ENCODE measurements at regions of chr1 and their contacts with region 1.

Region 1: GRCh38 chr1:112706908-112707663 is at the start of gene RHOC:
- DNase-seq: peak; percentile 46 to 70 (median 52)
- H3K4me3 ChIP-seq: peak within 1 kb of the TSS; percentile 27
- H3K4me3 Mint-ChIP-seq: peak within 1 kb of the TSS; percentile 71 to 94 (median 87)
- H3K27ac ChIP-seq: peak within 1 kb of the TSS; percentile 71
- H3K27ac Mint-ChIP-seq: peak within 1 kb of the TSS in 7 of 8 donors; percentile 70 to 97 (median 90)
- H3K4me1 ChIP-seq: peaks cover 33% of the 10 kb centered on the region
- H3K4me1 Mint-ChIP-seq: peaks cover 38 to 43% (median 41%) of the 10 kb centered on the region in 3 donors
- H3K27me3 ChIP-seq: no peaks in the 10 kb centered on the region
- H3K27me3 Mint-ChIP-seq: peaks cover 2 to 5% of the 10 kb centered on the region in 2 donors
- total RNA-seq, gene RHOC: 20.3 to 23.0 TPM

Region 2: GRCh38 chr1:112390775-112391602 is 316.1 kb before region 1 on chr1:
- CTCF ChIA-PET with region 1: interaction called, 20 read pairs
- POLR2A ChIA-PET with region 1: no interaction called
- DNase-seq: peak; percentile 60 to 82 (median 71)
- H3K4me3 ChIP-seq: no peak overlapping the region
- H3K4me3 Mint-ChIP-seq: peak overlapping the region in 5 of 7 donors; percentile 15 to 49 (median 45)
- H3K27ac ChIP-seq: no peak overlapping the region
- H3K27ac Mint-ChIP-seq: no peak overlapping the region
- H3K4me1 ChIP-seq: peaks cover 13% of the 10 kb centered on the region
- H3K4me1 Mint-ChIP-seq: peaks cover 10 to 14% (median 14%) of the 10 kb centered on the region in 3 donors
- H3K27me3 ChIP-seq: no peaks in the 10 kb centered on the region
- H3K27me3 Mint-ChIP-seq: peaks cover 32 to 53% of the 10 kb centered on the region in 2 donors

Region 3: DNA sequence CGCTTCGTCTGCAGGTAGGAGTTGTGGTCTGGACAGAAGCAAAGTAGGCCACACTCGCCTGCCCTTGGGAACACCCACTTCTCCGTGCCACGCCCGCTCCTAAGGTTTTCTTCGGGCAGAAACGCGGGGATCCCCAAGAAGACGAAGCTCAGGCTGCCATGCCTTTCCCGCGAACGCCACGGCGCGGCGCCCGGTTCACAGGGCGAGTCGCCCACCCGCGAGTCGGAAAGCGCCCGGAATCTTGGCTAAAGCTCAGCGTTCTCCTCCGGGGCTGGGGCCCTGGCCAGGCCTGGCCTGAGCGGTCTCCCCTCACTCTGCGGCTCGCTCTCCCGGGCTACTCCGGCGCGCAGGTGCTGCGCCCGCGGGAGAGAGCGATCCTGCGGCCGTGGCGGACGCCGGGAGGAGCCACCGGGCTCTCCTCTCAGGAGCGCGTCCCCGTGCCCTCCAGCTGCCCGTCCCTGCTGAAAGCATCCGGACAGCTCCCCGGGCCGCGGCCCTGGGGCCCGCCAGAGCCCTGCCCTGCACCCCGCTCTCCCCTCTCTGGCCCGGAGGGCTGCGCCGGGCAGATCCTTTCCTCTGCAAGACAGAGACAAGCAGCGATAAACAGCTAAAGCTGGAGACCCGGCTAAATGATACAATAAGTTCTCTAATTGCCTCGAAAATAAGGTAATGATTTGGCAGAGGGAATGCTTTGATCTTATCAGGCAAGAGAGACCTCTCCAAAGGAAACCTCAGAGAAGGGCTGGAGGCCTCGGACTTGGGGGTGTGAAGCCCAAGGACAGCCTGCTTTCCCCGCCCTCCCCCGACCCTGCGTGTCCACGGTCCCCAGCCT is 205.1 kb before region 1 on chr1:
- CTCF ChIA-PET with region 1: interaction called, 51 read pairs
- POLR2A ChIA-PET with region 1: interaction called, 3 read pairs
- DNase-seq: peak; percentile 29 to 68 (median 36)
- H3K4me3 ChIP-seq: peak overlapping the region; percentile 34
- H3K4me3 Mint-ChIP-seq: peak overlapping the region; percentile 7 to 76 (median 70)
- H3K27ac ChIP-seq: no peak overlapping the region
- H3K27ac Mint-ChIP-seq: no peak overlapping the region
- H3K4me1 ChIP-seq: peaks cover 5% of the 10 kb centered on the region
- H3K4me1 Mint-ChIP-seq: peaks cover 2 to 11% (median 6%) of the 10 kb centered on the region in 3 donors
- H3K27me3 ChIP-seq: peaks cover 42% of the 10 kb centered on the region
- H3K27me3 Mint-ChIP-seq: peaks cover 50 to 74% of the 10 kb centered on the region in 2 donors

Region 4: DNA sequence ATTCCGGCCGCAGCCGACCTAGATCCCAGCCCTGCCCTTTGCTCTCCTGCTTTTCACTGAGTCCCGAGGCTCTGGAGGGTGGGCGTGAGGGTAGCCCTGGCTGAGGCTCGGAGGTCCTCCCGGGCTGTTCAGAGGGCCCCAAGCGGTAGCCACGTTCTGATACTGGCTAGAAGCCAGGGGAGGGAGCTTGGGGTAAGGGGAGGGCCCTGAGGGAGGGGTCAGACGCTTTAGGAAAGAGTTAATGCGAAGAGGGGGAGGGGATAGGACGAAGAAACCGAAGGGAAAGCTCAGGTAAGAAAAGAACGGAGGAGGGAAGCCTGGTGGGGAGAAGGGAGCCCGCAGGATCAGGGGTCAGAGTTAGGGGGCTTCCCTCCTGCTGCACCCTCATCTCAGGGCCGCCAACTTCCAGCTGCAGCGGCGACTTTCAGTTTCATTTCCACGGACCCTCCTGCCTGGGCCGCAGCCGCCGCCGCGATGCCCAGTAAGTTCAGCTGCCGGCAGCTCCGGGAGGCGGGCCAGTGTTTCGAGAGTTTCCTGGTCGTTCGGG is 32.6 kb before region 1 on chr1 and contains the start of gene MOV10:
- CTCF ChIA-PET with region 1: interaction called, 23 read pairs
- POLR2A ChIA-PET with region 1: interaction called, 3 read pairs
- DNase-seq: peak; percentile 48 to 77 (median 64)
- H3K4me3 ChIP-seq: peak within 1 kb of the TSS; percentile 79
- H3K4me3 Mint-ChIP-seq: peak within 1 kb of the TSS; percentile 81 to 99 (median 97)
- H3K27ac ChIP-seq: peak within 1 kb of the TSS; percentile 81
- H3K27ac Mint-ChIP-seq: peak within 1 kb of the TSS; percentile 61 to 98 (median 94)
- H3K4me1 ChIP-seq: peaks cover 24% of the 10 kb centered on the region
- H3K4me1 Mint-ChIP-seq: peaks cover 45 to 58% (median 52%) of the 10 kb centered on the region in 3 donors
- H3K27me3 ChIP-seq: no peaks in the 10 kb centered on the region
- H3K27me3 Mint-ChIP-seq: no peaks in the 10 kb centered on the region
- total RNA-seq, gene MOV10: 29.9 to 31.0 TPM

Region 5: GRCh38 chr1:112778137-112778536 is 71.1 kb after region 1 on chr1:
- CTCF ChIA-PET with region 1: no interaction called
- POLR2A ChIA-PET with region 1: no interaction called
- DNase-seq: no peak
- H3K4me3 ChIP-seq: no peak overlapping the region
- H3K4me3 Mint-ChIP-seq: no peak overlapping the region
- H3K27ac ChIP-seq: no peak overlapping the region
- H3K27ac Mint-ChIP-seq: no peak overlapping the region
- H3K4me1 ChIP-seq: no peaks in the 10 kb centered on the region
- H3K4me1 Mint-ChIP-seq: no peaks in the 10 kb centered on the region
- H3K27me3 ChIP-seq: no peaks in the 10 kb centered on the region
- H3K27me3 Mint-ChIP-seq: peaks cover 6 to 17% of the 10 kb centered on the region in 2 donors

Region 6: DNA sequence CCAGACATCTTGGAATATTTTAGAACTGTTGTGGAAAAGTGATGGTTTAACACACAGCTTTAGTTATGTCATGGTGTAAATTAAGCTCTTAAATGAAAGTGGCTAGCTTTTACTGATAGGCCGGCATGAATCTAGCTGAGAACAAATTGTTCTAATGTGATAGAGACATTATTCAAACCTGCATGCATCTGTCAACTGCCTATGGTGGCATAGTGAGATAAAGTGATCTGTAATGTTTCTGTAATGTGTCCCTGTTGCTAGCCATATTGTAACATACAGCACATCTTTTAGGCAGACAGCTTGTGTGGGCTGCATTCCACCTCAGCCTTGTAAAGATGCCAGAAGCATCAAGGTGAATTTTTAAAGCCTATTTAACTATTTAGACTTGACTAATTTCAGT is 381.9 kb after region 1 on chr1:
- CTCF ChIA-PET with region 1: no interaction called
- POLR2A ChIA-PET with region 1: no interaction called
- DNase-seq: no peak
- H3K4me3 ChIP-seq: no peak overlapping the region
- H3K4me3 Mint-ChIP-seq: no peak overlapping the region
- H3K27ac ChIP-seq: no peak overlapping the region
- H3K27ac Mint-ChIP-seq: peak overlapping the region in 2 of 8 donors; percentile 23 to 31
- H3K4me1 ChIP-seq: no peaks in the 10 kb centered on the region
- H3K4me1 Mint-ChIP-seq: peaks cover 42 to 56% (median 55%) of the 10 kb centered on the region in 3 donors
- H3K27me3 ChIP-seq: no peaks in the 10 kb centered on the region
- H3K27me3 Mint-ChIP-seq: no peaks in the 10 kb centered on the region